Upper lobe of right lung (tissue), 1 donor: ENCODE measurements at regions of chr10 and their contacts with region 1.

Region 1: GRCh38 chr10:119199231-119199992 is 8.0 kb upstream of the GRK5 start:
- DNase-seq: no peak
- ATAC-seq: peak; percentile 94
- H3K4me3 ChIP-seq: no peak overlapping the region
- H3K27ac ChIP-seq: no peak overlapping the region
- H3K4me1 ChIP-seq: peaks cover 6% of the 10 kb centered on the region
- H3K27me3 ChIP-seq: no peaks in the 10 kb centered on the region
- CTCF ChIP-seq: peak; percentile 79

Region 2: DNA sequence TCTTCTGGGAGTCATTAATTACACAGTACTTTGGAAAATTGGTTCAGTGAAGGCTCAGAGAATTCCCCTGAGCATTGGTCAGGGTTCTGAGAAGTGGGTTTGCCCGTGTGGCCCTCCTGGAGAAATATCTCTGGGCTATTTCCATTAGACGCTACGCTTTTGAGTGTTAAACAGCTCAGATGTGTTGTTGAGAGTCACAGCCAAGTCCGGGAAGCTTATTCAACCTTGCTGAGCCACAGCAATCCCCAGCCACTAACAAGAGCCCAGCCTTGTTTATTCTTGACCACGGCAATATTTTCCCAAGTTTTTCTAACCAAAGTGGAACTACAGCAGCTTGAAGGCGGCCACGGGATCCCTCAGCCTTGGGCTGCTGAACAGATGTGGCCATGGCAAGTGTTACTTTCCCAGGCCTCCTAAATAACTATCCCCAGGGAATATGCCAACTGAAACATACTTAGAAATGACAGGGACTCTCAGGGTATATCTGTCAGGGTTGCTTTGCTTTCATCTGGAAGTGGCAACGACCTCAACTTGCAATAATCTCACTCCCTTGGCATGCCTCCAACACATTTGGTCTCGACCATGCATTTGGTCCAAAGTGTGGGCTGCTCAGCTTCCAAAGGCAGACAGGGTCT is 1442.2 kb before region 1 on chr10:
- intact Hi-C with region 1: no loop called
- DNase-seq: no peak
- ATAC-seq: no peak
- H3K4me3 ChIP-seq: no peak overlapping the region
- H3K27ac ChIP-seq: no peak overlapping the region
- H3K4me1 ChIP-seq: no peaks in the 10 kb centered on the region
- H3K27me3 ChIP-seq: no peaks in the 10 kb centered on the region
- CTCF ChIP-seq: no peak

Region 3: DNA sequence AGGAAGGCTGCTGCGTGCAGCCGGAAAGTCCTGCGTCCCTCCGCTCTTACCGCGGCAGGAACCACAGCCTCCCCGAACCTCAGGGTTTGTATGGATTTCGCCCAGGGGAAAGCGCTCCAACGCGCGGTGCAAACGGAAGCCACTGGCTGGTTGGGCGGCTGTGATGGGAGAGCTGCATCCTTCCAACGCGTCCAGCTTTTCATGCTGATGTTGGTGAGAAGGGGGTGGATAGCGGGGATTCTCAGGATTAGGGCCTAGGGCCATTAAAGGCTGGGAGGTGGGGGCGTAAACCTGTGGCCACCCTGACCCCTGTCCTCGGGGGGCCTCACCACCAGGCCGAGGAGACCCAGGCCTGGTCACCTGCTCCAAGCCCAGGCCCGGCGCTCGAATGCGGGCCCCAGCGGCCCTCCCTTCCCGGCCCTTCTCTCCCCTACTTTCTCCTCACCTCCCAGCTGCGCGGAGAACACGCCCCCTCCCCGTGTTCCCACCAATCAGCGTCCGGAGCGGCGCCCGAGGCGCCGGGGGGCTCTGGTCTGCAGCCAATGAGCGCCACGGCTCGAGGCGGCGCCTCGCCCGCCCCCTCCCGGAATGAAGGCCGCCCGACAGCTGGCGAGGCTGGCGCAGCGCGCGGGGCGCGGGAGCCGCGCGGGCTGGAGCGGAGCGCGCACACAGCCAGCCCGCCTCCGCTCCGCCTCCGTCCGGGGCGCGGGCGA is 170.4 kb before region 1 on chr10:
- intact Hi-C with region 1: no loop called
- DNase-seq: peak; percentile 94
- ATAC-seq: peak; percentile 88
- H3K4me3 ChIP-seq: peak overlapping the region; percentile 39
- H3K27ac ChIP-seq: no peak overlapping the region
- H3K4me1 ChIP-seq: peaks cover 13% of the 10 kb centered on the region
- H3K27me3 ChIP-seq: no peaks in the 10 kb centered on the region
- CTCF ChIP-seq: peak; percentile 21

Region 4: GRCh38 chr10:119542988-119543813 is 343.8 kb after region 1 on chr10:
- intact Hi-C with region 1: loop called (anchors 10 kb)
- DNase-seq: peak; percentile 76
- ATAC-seq: peak; percentile 71
- H3K4me3 ChIP-seq: peak overlapping the region; percentile 63
- H3K27ac ChIP-seq: peak overlapping the region; percentile 55
- H3K4me1 ChIP-seq: peaks cover 4% of the 10 kb centered on the region
- H3K27me3 ChIP-seq: peaks cover 6% of the 10 kb centered on the region
- CTCF ChIP-seq: peak; percentile 51

Region 5: DNA sequence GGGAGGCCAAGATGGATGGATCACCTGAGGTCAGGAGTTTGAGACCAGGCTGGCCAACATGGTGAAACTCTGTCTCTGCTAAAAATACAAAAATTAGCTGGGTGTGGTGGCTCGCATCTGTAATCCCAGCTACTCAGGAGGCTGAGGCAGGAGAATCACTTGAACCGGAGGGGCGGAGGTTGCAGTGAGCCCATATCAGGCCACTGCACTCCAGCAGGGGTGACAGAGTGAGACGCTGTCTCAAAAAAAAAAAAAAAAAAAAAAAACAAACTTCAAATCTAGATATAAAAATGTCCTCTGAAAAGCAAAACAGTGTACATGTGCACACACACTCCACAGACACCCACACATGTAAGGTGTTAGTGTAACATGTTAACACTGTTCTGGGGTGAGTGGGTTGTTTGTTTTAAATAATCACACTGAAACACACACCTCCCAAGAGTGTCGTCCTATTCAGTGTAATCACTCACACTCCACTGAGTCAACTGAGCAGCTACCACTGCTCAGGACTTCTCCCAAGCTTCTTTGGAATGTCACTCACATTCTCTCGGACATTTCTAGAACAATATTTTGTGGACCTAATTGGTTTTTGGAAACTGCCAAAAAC is 355.9 kb after region 1 on chr10:
- intact Hi-C with region 1: no loop called
- DNase-seq: no peak
- ATAC-seq: no peak
- H3K4me3 ChIP-seq: no peak overlapping the region
- H3K27ac ChIP-seq: no peak overlapping the region
- H3K4me1 ChIP-seq: no peaks in the 10 kb centered on the region
- H3K27me3 ChIP-seq: no peaks in the 10 kb centered on the region
- CTCF ChIP-seq: no peak